ENCODE measurements at regions of chr11 and their contacts with region 1.

Region 1: DNA sequence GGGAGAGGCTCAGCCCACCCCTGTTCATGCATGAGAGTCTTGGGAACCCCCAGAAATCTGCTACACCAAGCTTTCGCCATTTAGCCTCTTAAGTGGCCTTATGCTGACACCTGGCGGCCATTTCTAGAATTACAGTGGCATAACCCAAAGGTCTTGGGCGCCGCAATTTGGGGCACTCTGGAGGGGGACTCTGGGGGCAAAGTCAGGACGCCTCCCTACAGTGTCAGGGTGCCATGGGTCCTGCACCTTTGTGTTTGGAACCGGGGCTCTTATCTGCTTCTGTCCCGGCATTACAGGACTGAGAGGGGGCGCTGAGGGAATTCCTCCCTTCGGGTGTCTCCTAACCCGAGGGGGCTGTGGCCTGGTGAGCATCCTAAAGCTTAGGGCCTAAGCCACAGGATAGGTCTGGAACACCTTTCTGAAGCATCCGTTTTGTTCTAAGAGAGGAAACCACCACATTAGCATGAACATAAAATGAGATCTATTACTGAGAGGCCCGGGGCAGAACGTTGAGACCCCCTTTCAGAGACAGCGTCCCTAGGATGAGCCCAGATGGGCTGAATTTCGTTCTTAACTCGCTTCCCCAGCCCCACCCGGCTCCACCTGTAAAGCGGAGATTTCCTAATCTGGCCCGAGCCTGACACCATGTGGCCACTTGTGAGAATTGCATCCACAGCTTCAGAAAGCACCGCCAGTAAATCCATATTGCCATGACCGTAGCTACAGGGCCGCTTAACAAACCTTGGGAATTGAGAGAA is 9.3 kb downstream of the INS start:
- DNase-seq: peak in 1 of 2 experiments; percentile 91
- H3K4me3 ChIP-seq: peak overlapping the region in 1 of 4 experiments; percentile 33; a peak in 2 of 8 replicates
- H3K27ac ChIP-seq: no peak overlapping the region
- H3K4me1 ChIP-seq: peaks cover 0 to 3% (median 2%) of the 10 kb centered on the region in 4 experiments; a peak in 4 of 7 replicates
- H3K27me3 ChIP-seq: peaks cover 17 to 35% (median 31%) of the 10 kb centered on the region in 4 experiments
- CTCF ChIP-seq: peak; percentile 66 to 84 (median 84)
- EP300 ChIP-seq: no peak
- POLR2A ChIP-seq: no peak
- RAD21 ChIP-seq: peak; percentile 86 to 87

Region 2: DNA sequence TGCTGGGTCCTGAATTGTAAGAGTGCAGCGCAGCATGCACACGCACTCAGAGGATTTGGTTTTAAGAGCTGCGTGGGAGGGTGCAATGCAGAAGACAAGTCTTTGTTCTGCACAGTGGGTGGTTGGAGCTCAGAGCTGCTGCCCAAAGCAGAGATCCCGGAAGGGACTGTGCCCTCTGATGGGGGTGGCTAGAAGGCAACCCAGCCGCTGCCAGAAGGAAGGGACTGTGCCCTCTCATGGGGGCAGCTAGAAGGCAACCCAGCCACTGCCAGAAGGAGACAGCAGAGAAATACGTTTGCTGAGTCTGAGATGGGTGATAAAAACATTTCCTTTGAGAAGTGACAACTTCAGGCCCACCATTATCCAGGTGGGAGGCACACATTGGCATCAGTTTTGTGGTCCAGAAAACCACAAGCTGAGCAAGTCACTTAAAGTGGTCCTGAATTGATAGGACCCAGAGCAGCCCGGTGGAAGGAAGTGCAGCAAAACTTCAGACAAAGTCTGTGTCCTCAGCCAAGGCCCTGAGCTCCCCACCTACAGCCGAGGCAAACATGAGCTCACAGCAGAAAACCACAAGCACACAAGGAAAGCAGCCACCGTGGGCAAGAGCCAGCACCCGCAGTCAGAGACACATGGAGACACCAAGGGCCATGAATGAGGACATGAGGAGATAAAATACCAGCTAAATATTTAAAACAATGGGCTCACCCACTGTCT is 450.4 kb before region 1 on chr11:
- CTCF ChIA-PET with region 1: interaction called, 18 read pairs
- POLR2A ChIA-PET with region 1: no interaction called
- DNase-seq: no peak
- H3K4me3 ChIP-seq: no peak overlapping the region
- H3K27ac ChIP-seq: no peak overlapping the region
- H3K4me1 ChIP-seq: peaks cover 0 to 5% (median 3%) of the 10 kb centered on the region in 4 experiments; a peak in 2 of 7 replicates
- H3K27me3 ChIP-seq: no peaks in the 10 kb centered on the region
- CTCF ChIP-seq: peak in 2 of 3 experiments; percentile 8 to 17; a peak in 1 of 4 replicates
- EP300 ChIP-seq: no peak
- POLR2A ChIP-seq: no peak
- RAD21 ChIP-seq: no peak

Region 3: DNA sequence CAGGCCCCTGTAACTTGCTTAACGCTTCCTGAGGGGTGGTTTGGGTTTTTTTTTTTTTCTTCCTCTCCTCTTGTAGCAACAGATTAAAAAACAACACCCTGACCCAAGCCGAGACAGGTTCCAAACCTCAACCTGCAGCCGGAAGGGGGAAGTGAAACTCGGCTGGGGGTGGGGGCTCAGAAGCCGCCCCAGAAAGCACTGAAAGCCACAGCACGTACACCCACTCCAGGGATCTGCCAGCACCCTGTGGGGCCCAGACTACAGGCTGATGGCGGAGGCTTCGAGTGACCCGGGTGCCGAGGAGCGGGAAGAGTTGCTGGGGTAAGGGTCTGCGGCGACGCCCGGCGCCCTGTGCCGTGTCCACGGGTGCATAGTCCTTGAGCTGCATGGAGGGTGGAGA is 298.8 kb before region 1 on chr11 and contains the start of gene LSP1:
- CTCF ChIA-PET with region 1: interaction called, 232 read pairs
- POLR2A ChIA-PET with region 1: interaction called, 3 read pairs
- DNase-seq: no peak
- H3K4me3 ChIP-seq: no peak within 1 kb of the TSS
- H3K27ac ChIP-seq: no peak within 1 kb of the TSS
- H3K4me1 ChIP-seq: no peaks in the 10 kb centered on the region
- H3K27me3 ChIP-seq: no peaks in the 10 kb centered on the region
- CTCF ChIP-seq: no peak
- EP300 ChIP-seq: no peak
- POLR2A ChIP-seq: no peak
- RAD21 ChIP-seq: no peak
- total RNA-seq, gene LSP1: not detected in 2 replicates

Region 4: DNA sequence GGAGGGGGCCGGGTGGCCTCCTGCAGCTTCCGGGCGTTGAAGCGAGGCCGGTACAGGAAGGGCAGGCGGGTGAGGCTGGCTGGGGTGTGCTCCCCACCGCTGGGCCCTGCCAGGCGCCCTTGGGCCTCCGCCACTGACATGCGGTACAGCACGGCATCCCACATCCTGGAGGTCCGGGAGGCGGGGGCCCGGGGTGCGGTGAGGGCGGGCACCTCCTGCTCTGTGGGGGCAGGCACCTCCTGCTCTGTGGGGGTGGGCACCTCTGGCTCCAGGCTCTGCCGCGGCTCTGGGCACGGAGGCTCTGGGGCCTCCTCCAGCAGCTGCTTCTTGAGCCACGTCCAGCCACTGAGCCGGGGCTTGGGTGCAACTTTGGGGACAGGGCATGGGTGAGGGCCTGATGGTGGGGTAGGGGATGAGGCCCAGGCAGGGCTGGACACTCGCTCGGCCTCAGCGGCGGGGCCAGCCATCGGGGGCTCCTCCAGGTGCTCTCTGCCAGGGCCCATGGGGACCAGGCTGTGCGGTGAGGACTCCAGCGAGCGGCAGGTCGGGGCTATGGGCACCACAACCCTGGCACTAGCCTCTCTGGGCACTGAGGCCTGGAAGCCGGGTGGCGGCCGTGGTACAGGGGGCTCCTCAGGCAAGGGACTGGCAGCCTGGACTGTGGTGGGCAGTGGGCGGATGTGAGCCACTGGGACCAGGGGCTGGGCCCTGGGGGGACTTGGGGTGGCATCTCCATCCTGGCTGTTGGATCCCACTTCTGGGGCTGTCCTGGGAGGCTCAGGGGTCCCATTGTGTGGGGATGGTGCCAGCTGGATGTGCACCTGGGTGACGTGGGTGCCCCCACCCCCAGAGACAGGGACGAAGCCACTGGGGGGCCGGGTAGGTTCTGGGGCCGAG is 262.2 kb before region 1 on chr11:
- CTCF ChIA-PET with region 1: interaction called, 170 read pairs
- POLR2A ChIA-PET with region 1: interaction called, 3 read pairs
- DNase-seq: no peak
- H3K4me3 ChIP-seq: no peak overlapping the region
- H3K27ac ChIP-seq: no peak overlapping the region
- H3K4me1 ChIP-seq: no peaks in the 10 kb centered on the region
- H3K27me3 ChIP-seq: no peaks in the 10 kb centered on the region
- CTCF ChIP-seq: no peak
- EP300 ChIP-seq: no peak
- POLR2A ChIP-seq: no peak
- RAD21 ChIP-seq: no peak

Region 5: DNA sequence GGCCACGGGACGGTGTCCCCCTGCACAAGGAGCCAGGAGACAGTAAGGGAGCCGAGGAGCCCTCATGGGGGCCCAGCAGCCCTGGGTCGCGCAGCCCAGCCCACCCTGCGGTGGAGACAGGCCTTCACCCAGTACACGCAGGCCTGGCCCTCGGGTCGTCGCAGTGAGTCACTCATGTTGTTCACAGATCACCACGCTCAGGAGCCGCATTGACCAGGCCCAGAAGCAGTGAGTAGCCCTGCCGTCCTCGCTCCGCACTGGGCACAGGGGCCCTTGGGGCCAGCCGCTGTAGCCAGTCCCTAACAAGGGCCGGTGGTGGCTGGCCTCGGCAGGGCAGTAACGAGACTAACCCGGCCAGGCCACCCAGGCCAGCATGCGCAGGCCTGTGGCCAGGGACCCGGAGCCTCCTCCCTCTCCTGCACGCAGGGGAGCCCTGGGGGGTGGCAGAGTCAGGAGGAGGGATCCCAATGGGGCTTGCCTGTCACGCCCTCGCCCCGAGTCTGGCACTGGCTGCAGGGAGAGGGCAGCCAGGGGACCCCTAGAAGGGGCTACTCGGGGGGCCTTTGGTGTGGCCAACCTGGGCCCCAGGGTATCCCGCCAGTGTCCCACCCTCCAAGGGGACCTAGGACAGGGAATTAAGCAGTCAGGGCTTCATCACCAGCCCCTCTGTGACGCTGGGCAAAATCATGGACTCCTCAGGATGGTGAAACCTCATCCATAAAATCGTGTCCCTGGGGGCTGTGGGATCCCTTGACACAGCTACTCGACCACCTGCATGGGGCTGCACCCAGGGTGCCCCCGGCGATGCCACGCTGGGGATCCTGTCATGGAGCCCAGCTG is 214.7 kb before region 1 on chr11:
- CTCF ChIA-PET with region 1: interaction called, 13 read pairs
- POLR2A ChIA-PET with region 1: no interaction called
- DNase-seq: peak in 1 of 2 experiments; percentile 49
- H3K4me3 ChIP-seq: no peak overlapping the region
- H3K27ac ChIP-seq: no peak overlapping the region
- H3K4me1 ChIP-seq: peaks cover 0 to 3% (median 0%) of the 10 kb centered on the region in 4 experiments; a peak in 1 of 7 replicates
- H3K27me3 ChIP-seq: no peaks in the 10 kb centered on the region
- CTCF ChIP-seq: no peak
- EP300 ChIP-seq: no peak
- POLR2A ChIP-seq: no peak
- RAD21 ChIP-seq: no peak

Region 6: GRCh38 chr11:2027708-2028107 is 124.0 kb before region 1 on chr11:
- CTCF ChIA-PET with region 1: interaction called, 551 read pairs
- POLR2A ChIA-PET with region 1: interaction called, 4 read pairs
- DNase-seq: no peak
- H3K4me3 ChIP-seq: no peak overlapping the region
- H3K27ac ChIP-seq: no peak overlapping the region
- H3K4me1 ChIP-seq: no peaks in the 10 kb centered on the region
- H3K27me3 ChIP-seq: no peaks in the 10 kb centered on the region
- CTCF ChIP-seq: no peak
- EP300 ChIP-seq: no peak
- POLR2A ChIP-seq: no peak
- RAD21 ChIP-seq: no peak

Region 7: DNA sequence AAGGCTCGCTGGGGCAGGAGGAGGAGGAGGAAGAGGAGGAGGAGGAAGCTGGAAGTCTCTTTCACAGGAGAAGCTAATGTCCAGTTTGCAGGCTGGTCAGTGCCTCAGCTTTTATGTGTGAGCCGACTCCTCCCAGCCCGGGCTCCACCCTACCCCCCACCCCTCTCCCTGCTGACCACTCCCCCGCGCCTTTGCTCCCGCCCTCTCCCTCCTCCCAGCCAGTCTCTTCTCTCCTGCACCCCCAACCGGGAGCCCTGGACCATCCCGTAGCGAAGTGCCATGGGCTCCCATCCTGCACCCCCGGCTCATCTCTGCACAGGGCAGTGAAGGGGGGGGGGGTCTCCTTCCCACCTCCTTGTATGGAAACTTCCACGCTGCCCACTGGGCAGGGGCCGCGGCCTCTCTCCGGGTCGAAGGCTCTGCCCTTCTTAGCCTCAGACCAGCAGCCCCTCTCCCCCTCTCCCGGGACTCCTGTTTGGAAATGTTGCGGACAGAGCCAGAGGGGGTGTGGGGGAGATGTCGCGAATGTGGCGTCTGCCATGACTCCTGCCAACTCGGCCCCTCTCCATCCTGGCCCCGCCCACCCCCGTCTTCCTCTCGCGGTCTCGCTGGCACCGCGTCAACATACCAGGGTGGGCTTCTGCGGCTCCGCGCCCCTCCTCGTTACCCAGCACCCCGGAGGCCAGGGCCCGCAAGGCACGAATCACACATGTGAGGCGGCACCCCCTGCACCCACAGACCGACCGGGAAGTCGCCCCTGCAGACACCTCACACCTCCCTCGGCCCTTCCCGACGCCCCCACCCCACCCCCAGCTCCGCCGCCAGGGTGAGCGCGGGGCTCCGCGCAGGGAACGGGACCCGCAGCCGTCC is 14.2 kb before region 1 on chr11:
- CTCF ChIA-PET with region 1: interaction called, 170 read pairs
- POLR2A ChIA-PET with region 1: interaction called, 3 read pairs
- DNase-seq: peak in 1 of 2 experiments; percentile 82
- H3K4me3 ChIP-seq: peak overlapping the region; percentile 26 to 65 (median 30)
- H3K27ac ChIP-seq: no peak overlapping the region
- H3K4me1 ChIP-seq: peaks cover 0 to 12% (median 7%) of the 10 kb centered on the region in 4 experiments; a peak in 6 of 7 replicates
- H3K27me3 ChIP-seq: peaks cover 52 to 86% (median 76%) of the 10 kb centered on the region in 4 experiments
- CTCF ChIP-seq: no peak
- EP300 ChIP-seq: no peak
- POLR2A ChIP-seq: no peak
- RAD21 ChIP-seq: no peak

Measured in H1 (cell line).